ENCODE measurements at regions of chr5 and their contacts with region 1.

Region 1: DNA sequence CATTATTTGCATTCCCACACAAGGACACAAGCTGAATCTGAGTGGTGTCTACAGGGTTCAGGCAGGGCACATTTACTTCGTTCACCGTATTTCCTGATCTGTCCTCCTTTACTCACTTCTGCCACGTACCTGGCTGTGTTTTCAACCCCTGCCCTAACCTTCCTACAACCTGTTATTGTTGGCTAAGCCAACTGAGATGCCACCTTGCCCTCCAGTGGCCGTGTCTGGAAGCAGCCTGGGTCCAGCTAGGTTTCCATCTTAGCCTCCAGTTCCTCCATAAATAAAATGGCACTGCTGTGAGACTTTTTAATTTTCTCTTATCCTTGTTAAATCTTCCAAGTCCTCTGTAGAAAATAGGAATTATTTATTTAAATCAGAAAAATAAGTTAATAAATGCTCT is 64.8 kb downstream of the ATP10B start:
- DNase-seq: peak; percentile 58 to 69
- H3K4me3 ChIP-seq: no peak overlapping the region
- H3K27ac ChIP-seq: no peak overlapping the region
- H3K4me1 ChIP-seq: peaks cover 0 to 6% of the 10 kb centered on the region in 2 donors
- H3K27me3 ChIP-seq: no peaks in the 10 kb centered on the region
- CTCF ChIP-seq: peak; percentile 32 to 85 (median 66)
- POLR2A ChIP-seq: no peak

Region 2: DNA sequence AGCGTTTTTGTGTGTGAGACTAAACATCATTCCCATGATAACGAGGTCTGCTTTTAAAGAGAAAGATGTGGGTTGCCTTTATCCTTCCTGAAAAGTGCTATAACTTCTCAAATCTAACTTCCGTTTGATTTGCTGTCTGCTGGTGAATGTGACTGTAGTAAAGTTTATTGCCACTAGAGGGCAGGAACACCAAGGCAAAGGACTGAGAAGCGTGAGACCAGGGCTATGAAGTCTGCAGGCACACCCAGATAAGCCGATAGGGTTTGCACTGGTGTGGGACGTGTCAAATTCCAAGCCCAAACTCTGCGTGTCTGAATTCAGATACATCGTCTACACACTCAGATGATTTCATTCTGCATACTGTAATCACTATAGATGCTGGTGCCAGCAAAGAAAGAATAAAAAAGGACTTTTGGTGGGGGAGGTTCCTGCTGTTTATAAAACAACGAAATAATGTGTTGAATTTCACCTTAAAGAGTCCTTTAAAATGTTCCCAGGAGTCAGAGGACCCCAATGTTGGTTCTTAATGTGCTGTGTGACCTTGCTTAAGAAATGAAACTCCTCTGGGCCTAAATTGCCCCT is 278.4 kb before region 1 on chr5:
- intact Hi-C with region 1: loop called (anchors 5 kb)
- DNase-seq: peak; percentile 54 to 57
- H3K4me3 ChIP-seq: no peak overlapping the region
- H3K27ac ChIP-seq: no peak overlapping the region
- H3K4me1 ChIP-seq: peaks cover 6 to 14% of the 10 kb centered on the region in 2 donors
- H3K27me3 ChIP-seq: no peaks in the 10 kb centered on the region
- CTCF ChIP-seq: peak; percentile 75 to 96 (median 89)
- POLR2A ChIP-seq: no peak

Region 3: GRCh38 chr5:160685695-160686094 is 101.5 kb before region 1 on chr5:
- intact Hi-C with region 1: loop called (anchors 10 kb)
- DNase-seq: no peak
- H3K4me3 ChIP-seq: no peak overlapping the region
- H3K27ac ChIP-seq: no peak overlapping the region
- H3K4me1 ChIP-seq: no peaks in the 10 kb centered on the region
- H3K27me3 ChIP-seq: no peaks in the 10 kb centered on the region
- CTCF ChIP-seq: peak in 4 of 6 experiments; percentile 29 to 56 (median 42)
- POLR2A ChIP-seq: no peak